Common myeloid progenitor, CD34-positive (primary cell): ENCODE measurements at regions of chr17 and their contacts with region 1.

Region 1: DNA sequence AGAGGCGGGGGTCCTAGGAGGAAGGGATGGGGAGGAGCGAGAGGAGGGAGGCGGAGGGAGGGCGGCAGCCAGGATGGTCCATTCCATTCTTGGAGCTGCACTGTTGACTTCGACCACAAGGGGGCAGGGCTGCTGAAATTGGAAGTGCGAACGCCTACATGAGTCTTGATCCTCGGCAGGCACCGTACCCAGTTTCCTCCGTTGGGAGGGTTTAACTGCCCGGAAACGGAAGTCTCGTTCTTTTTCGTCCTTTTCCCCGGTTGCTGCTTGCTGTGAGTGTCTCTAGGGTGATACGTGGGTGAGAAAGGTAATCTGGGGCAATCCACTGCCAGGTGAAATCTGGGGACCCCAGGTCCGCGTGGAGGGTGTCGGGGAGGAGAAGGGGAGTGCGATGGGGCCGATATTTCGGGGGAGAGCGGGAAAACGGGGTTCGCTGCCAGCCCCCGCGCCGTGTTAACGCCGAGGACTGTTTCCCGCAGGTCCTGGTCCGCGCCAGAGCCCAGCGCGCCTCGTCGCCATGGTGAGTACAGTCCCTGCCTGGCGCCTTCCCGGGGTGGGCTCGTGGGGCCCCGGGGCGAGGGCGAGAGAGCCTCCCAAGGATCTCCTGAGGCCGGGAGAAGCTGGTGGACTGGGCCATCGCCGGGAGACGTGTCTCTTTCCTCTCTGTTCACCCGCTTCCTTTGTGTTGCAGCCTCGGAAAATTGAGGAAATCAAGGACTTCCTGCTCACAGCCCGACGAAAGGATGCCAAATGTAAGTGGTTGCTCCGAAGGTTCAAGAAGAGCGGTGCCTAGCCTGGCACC is at the start of gene RPL38:
- DNase-seq: peak; percentile 98 to 99 (median 98)
- H3K4me3 ChIP-seq: peak within 1 kb of the TSS; percentile 69 to 98 (median 94)
- H3K27ac ChIP-seq: peak within 1 kb of the TSS; percentile 94 to 96
- H3K4me1 ChIP-seq: peaks cover 2 to 29% (median 25%) of the 10 kb centered on the region in 4 experiments
- H3K27me3 ChIP-seq: peaks cover 0 to 10% (median 3%) of the 10 kb centered on the region in 5 experiments

Region 2: DNA sequence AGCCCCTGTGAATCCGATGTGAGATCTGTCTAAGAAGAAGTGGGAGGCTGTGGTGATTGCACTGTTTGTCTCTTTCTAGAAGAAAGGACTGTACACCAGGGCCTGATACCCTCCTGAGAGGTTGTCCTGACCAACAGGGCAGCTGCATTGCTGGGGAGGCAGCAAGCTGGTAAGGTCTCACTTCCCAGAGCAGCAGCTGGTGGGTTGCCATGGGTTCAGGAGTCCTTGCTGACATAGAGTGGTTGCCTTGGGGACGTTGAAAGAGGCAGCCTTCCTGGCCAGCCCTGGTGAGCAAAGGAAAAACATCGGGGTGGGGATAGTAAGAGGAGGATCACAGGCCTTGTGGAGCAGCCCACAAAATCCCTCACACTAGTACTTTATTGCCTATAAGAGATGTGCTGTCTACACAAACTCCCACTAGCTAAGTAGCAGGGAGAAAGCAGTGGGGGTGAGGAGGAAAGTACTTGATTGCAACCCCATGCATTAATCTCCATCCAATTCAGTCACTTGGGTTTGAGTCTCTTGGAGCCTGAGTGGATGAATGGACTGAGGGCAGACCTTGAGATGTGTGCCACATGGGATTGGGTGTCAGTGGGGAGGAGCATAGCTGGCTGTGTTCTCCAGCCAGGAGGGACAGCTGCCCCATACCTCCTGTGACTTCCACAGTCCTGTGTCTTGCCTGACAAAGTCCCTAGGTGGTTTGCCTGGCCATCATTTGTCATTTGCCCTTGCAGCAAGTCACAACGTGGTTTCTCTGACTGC is 144.0 kb before region 1 on chr17:
- CTCF ChIA-PET with region 1: no interaction called
- POLR2A ChIA-PET with region 1: no interaction called
- DNase-seq: no peak
- H3K4me3 ChIP-seq: no peak overlapping the region
- H3K27ac ChIP-seq: no peak overlapping the region
- H3K4me1 ChIP-seq: no peaks in the 10 kb centered on the region
- H3K27me3 ChIP-seq: peaks cover 0 to 46% (median 23%) of the 10 kb centered on the region in 5 experiments

Region 3: GRCh38 chr17:74164446-74165045 is 39.1 kb before region 1 on chr17:
- CTCF ChIA-PET with region 1: no interaction called
- POLR2A ChIA-PET with region 1: no interaction called
- DNase-seq: no peak
- H3K4me3 ChIP-seq: no peak overlapping the region
- H3K27ac ChIP-seq: no peak overlapping the region
- H3K4me1 ChIP-seq: peaks cover 0 to 8% (median 2%) of the 10 kb centered on the region in 4 experiments
- H3K27me3 ChIP-seq: peaks cover 0 to 7% (median 0%) of the 10 kb centered on the region in 5 experiments

Region 4: GRCh38 chr17:74190172-74190571 is 13.5 kb before region 1 on chr17:
- CTCF ChIA-PET with region 1: interaction called, 18 read pairs
- POLR2A ChIA-PET with region 1: no interaction called
- DNase-seq: peak in 2 of 3 donors; percentile 69
- H3K4me3 ChIP-seq: no peak overlapping the region
- H3K27ac ChIP-seq: no peak overlapping the region
- H3K4me1 ChIP-seq: peaks cover 0 to 21% (median 15%) of the 10 kb centered on the region in 4 experiments
- H3K27me3 ChIP-seq: no peaks in the 10 kb centered on the region